Testis (tissue), 5 donors: ENCODE measurements at regions of chr9 and their contacts with region 1.

Region 1: GRCh38 chr9:5228541-5228940 is 2.7 kb upstream of the INSL4 start:
- DNase-seq: no peak
- H3K4me3 ChIP-seq: no peak overlapping the region
- H3K27ac ChIP-seq: no peak overlapping the region
- H3K4me1 ChIP-seq: no peaks in the 10 kb centered on the region
- H3K27me3 ChIP-seq: no peaks in the 10 kb centered on the region
- CTCF ChIP-seq: no peak
- POLR2A ChIP-seq: no peak

Region 2: GRCh38 chr9:5274770-5275169 is 46.2 kb after region 1 on chr9:
- intact Hi-C with region 1: loop called (anchors 5 kb)
- DNase-seq: no peak
- H3K4me3 ChIP-seq: no peak overlapping the region
- H3K27ac ChIP-seq: no peak overlapping the region
- H3K4me1 ChIP-seq: no peaks in the 10 kb centered on the region
- H3K27me3 ChIP-seq: no peaks in the 10 kb centered on the region
- CTCF ChIP-seq: no peak
- POLR2A ChIP-seq: no peak